Activated T-helper 2 cell treated with anti-CD3 and anti-CD28 coated beads, Interferon-gamma antibody, Interleukin-2, Interleukin-4, amounts not matched to agents 10 μg/mL and 5 μg/mL and 100 μg/mL, durations not matched to agents 14 hours and 24 hours and 36 hours (primary cell): ENCODE measurements at regions of chr11 and their contacts with region 1.

Region 1: DNA sequence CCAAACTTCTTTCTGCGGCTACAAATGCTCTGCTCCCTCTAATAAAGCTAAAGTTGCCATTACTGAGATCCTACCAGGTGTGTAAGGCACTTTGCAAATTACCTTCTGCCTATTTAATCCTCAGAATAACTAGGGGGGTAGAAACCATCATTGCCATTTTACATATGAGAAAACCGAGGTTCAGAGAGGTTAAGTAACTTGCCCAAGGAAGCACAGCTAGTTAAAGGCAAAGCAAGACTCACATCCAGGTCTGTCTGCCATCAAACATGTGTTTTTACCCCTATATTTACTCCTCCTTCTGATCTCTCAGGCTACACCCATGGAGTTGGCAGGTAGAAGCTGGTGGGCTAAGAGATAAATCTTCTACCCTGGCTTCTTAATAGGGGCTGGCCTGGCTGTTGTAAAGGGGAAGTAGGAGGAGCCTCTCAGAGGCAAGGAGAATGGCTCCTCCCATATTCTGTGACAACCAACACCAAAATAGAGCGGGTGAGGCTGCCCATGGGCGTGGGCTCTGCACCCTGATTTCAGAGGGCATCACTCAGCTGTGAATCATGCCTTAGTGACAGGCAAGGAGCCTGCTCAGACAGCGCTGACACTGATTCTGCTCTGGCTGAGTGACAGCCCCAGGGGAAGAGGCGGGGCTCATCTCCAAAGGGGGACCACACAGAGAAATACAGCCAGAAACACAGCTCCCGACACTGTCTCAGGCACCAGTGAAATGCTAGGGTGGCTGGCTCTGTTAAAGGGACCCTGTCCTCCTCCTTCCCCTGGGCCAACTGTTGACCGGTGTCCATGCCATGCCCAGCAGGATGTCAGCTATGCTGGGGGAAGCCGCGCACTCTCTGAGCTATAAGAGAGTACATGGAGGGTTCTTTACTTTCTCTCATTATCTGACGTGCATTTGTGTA is 106.8 kb downstream of the ABTB2 start:
- DNase-seq: peak; percentile 61
- H3K4me3 Mint-ChIP-seq: peak overlapping the region; percentile 34
- H3K27ac Mint-ChIP-seq: peak overlapping the region; percentile 47
- H3K4me1 Mint-ChIP-seq: peaks cover 68% of the 10 kb centered on the region
- H3K27me3 Mint-ChIP-seq: no peaks in the 10 kb centered on the region

Region 2: GRCh38 chr11:34068111-34068510 is 182.9 kb before region 1 on chr11:
- intact Hi-C with region 1: loop called (anchors 5 kb)
- DNase-seq: no peak
- H3K4me3 Mint-ChIP-seq: no peak overlapping the region
- H3K27ac Mint-ChIP-seq: peak overlapping the region; percentile 46
- H3K4me1 Mint-ChIP-seq: peaks cover 34% of the 10 kb centered on the region
- H3K27me3 Mint-ChIP-seq: no peaks in the 10 kb centered on the region

Region 3: DNA sequence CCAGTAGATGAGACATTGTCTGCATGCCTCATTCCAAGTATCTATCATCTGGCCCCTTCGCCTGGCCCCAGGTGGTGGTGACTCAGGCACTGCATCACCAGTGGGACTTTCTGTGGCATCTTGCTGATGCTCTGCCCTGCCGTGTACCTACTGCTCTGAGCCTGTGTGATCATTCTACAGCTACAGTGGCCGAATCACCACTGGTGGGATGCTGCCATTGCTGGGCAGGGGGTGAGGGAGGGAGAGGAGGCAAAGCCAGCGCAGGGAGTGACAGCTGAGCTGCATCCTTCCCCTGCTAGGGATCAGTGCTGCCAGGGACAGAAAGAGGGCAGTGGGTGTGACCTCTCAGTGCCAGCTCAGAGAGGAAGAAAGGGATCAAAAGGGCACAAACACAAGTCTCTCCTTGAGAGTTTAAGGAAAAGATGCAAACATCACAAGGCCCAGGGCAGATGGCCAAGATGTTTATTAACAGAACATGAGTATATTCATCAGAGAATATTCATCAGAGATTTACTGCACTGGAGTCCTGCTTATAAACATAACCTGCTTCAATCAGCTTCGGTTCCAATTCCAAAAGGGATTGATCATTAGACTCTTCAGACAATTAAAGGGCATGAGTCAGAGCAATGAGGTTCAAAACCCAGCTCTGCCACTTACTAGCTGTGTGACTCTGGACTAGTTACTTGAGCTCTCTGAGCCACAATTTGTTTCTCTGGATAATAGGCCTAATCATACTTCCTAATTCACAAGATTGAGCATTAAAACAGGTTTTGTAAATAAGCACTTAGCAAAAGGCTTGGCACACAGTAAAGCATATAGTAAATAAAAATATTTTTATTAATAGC is 35.8 kb before region 1 on chr11:
- intact Hi-C with region 1: loop called (anchors 1 kb)
- DNase-seq: no peak
- H3K4me3 Mint-ChIP-seq: peak overlapping the region; percentile 6
- H3K27ac Mint-ChIP-seq: peak overlapping the region; percentile 84
- H3K4me1 Mint-ChIP-seq: peaks cover 27% of the 10 kb centered on the region
- H3K27me3 Mint-ChIP-seq: no peaks in the 10 kb centered on the region